Sciatic nerve (tissue), 2 donors: ENCODE measurements at regions of chr11 and their contacts with region 1.

Region 1: GRCh38 chr11:65013692-65014145 is 241 bp upstream of the ARL2 start:
- DNase-seq: peak; percentile 96
- ATAC-seq: peak; percentile 95

Region 2: DNA sequence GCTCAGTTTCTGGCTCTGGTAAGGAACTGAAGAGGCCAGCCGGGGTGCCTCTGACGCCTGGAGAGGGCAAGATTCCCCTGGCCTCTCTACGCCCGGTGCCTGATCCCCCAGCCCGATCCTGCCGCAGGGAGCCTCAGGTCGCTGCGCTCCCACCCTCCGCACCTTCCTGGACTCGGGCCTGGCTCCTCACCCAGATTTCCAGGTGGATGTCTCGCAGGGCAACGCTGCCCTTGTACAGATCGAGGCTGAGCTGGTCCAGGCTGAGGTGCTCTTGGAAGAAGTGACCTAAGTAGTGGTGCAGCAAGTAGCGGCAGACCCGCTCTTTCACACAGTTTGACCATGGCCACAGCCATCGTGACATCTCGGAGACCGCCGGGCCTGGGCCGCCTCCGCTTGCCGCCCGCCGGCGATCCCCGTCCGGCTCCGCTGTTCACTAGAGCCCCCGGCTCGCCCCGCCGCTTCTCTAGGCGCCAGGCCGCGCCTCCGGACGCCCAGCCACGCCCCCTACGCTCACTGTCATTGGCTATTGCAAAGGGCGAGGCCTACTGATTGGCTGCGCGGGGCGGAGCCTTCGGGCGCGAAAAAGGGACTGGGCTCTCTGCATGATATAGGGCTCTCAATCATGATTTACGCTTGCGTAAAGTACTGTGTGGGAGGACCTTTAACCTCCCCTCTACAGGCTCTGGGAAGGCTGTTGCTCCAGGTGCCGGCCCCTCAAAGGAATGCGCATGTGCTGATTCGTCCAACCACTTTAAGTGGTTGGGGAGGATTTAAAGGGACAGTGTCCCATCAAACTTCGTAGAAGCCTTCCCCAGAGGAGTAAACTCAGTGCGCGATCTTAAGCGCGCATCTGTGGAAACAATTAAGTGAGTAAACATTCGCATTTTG is 96.7 kb before region 1 on chr11 and contains the start of gene ATG2A:
- intact Hi-C with region 1: loop called (anchors 10 kb)
- DNase-seq: peak; percentile 99
- ATAC-seq: peak; percentile 98
- total RNA-seq, gene ATG2A: 28.0 TPM

Region 3: DNA sequence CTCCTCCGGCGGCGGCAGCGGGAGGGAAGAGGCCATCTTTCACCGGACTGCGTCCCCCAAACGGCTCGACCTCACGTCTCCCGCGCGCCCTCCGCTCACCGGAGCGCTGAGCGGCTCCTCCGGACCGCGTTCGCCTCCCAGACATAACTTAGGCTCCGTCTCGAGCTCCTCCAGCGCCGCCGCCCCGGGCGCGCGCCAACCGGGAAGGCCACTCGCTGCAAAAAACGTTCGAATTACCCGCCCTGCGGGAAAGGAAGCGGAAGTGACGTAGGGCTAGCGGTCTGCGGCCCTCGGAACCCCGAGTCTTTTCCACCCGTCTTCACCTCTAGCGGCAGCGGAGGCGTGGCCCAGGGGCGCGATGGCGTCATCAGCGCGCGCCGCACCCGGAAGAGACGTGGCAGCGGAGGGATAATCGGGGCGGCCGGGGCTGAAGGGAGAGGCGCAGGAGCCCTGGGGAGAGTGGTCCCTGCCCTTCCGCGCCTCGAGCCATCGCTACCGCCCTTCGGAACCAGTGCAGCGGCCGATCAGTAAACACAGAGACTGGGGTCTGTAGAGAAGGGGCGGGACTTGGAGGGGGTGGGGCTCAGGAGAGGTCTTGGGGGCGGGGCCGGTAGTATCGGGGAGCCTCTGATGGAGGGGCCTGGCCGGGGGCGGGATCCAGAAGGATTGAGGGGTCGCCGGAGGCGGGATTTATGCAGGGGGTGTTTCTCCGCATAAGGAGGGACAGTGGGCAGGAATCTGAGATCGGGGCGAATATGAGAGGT is 70.3 kb after region 1 on chr11 and contains the starts of genes CDCA5 and ZFPL1:
- intact Hi-C with region 1: no loop called
- DNase-seq: peak; percentile 97
- ATAC-seq: peak; percentile 99
- total RNA-seq, gene CDCA5: 0.71 TPM
- total RNA-seq, gene ZFPL1: 32.9 TPM

Region 4: DNA sequence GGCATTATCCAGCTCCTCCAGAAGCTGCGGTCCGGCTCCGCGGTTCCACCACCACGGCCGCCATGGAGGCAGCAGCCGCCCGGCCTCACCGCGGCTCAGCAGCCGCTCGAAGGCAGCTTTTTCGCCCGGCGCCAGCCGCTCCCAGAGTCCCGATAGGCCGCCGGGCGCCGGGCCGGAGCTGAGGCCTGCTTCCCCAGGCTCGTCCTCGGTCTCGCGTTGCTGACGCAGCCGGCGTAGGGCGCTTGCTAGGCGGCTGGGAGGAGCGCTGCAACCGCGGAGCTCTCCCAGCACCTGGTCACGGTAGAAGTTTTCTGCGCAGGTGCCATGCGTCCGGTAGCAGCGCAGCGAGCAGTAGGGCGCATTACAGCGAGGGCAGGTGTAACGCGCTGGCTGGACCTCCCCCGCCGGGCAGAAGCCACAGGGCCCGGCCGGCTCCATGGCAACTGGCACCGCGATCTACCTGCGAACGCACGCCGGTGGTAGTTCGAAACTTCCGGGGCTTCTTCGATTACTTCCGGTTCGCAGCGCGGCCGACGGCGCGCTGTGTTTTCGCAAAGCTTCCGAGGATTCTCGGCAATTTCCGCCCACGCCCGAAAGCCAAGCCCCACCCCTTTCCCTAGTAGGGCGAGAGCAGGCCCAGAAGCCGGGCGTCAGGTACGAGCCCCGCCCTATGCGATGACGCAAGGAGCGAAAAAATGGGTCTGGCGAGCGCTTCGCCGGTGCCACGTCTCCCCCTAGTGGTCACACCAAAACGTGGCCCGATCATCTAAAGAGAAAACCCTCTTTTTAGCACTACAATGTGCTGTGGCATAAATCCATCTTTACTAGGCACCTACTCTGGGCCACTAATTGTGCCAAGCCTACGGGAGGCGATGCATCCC is 103.7 kb after region 1 on chr11 and contains the start of gene ZNHIT2:
- intact Hi-C with region 1: loop called (anchors 10 kb)
- DNase-seq: peak; percentile 100
- ATAC-seq: peak; percentile 94
- total RNA-seq, gene ZNHIT2: 6.8 TPM